HEK293 (cell line): ENCODE measurements at regions of chr3 and their contacts with region 1.

Region 1: DNA sequence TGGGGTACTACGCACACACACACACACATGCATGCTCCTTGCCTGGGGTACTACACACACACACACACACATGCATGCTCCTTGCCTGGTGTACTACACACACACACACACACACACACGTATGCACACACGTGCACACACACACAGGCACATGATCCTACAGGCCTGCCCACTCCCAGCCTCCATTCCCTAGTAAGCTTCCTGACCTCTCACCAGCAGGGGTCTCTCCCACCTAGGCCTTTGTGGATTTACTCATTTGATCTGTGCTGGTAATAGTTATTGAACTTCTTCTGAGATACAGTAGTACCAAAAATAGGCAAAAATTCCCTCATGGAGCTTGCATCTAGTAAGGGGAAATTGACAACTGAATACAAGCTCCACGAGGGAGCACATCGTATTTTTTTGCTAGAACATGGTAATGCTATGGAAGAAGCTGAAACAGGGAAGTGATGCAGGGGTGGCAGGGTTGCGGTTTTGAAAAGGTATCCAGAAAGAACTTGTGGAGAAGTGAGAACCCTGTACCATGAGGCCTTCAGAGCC is 19.1 kb downstream of the TTC21A start:
- H3K4me3 ChIP-seq: no peak overlapping the region
- H3K27ac ChIP-seq: no peak overlapping the region
- H3K4me1 ChIP-seq: no peaks in the 10 kb centered on the region
- CTCF ChIP-seq: peak; percentile 70

Region 2: DNA sequence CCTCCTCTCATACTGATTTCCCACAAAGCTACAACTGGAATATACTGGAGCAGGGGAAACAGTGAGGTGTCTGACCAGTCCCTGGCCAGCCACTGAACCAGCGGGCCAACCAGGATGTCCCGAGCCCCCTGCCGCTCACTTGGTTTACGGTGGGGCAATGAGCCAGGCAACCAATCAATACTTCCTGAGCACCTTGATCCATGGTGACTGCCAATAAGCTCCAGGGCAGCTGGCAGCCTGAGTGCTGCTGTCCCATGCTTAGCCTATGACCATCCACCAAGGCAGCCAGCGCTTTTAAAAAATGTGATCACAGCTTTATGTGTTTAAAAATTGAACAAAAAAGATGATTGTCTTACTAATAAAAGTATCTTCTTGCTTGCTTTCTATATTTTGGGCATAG is 314.8 kb before region 1 on chr3:
- CTCF ChIA-PET with region 1: no interaction called
- POLR2A ChIA-PET with region 1: no interaction called
- H3K4me3 ChIP-seq: no peak overlapping the region
- H3K27ac ChIP-seq: no peak overlapping the region
- H3K4me1 ChIP-seq: no peaks in the 10 kb centered on the region
- CTCF ChIP-seq: no peak

Region 3: DNA sequence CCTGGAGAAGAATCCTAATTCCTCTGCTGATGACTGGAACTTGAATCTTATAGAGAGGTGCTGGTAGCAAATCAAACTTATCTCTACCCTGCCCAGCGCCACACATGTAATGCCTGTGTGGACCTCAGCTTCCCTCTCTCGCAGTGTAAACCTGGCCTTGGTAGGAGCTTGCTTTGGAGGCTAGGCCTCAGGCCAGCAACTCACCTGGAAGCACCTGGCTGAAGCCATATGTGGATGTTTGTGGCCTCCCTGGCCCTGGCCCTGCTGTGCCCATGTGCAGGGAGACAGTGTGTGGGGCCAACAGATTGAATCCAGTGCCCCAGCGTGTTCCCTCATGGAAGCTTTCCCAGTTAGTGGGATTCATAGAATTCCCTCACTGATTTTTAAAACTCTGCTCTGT is 10.7 kb before region 1 on chr3:
- CTCF ChIA-PET with region 1: interaction called, 19 read pairs
- POLR2A ChIA-PET with region 1: no interaction called
- H3K4me3 ChIP-seq: no peak overlapping the region
- H3K27ac ChIP-seq: no peak overlapping the region
- H3K4me1 ChIP-seq: no peaks in the 10 kb centered on the region
- CTCF ChIP-seq: no peak

Region 4: GRCh38 chr3:39150799-39151631 is 24.4 kb after region 1 on chr3:
- CTCF ChIA-PET with region 1: interaction called, 11 read pairs
- POLR2A ChIA-PET with region 1: interaction called, 3 read pairs
- H3K4me3 ChIP-seq: peak overlapping the region; percentile 86
- H3K27ac ChIP-seq: peak overlapping the region; percentile 69
- H3K4me1 ChIP-seq: peaks cover 17% of the 10 kb centered on the region
- CTCF ChIP-seq: no peak